ENCODE measurements at regions of chr20 and their contacts with region 1.

Region 1: GRCh38 chr20:4073852-4074741 is 58.7 kb upstream of the RNF24 start:
- DNase-seq: no peak
- H3K4me3 ChIP-seq: no peak overlapping the region
- H3K27ac ChIP-seq: no peak overlapping the region
- H3K4me1 ChIP-seq: no peaks in the 10 kb centered on the region
- H3K27me3 ChIP-seq: no peaks in the 10 kb centered on the region
- CTCF ChIP-seq: no peak
- POLR2A ChIP-seq: no peak

Region 2: GRCh38 chr20:3889489-3890397 is 184.4 kb before region 1 on chr20:
- intact Hi-C with region 1: loop called (anchors 2 kb)
- DNase-seq: no peak
- H3K4me3 ChIP-seq: peak overlapping the region; percentile 96 to 100 (median 98)
- H3K27ac ChIP-seq: peak overlapping the region; percentile 96 to 97
- H3K4me1 ChIP-seq: peaks cover 0 to 24% of the 10 kb centered on the region in 2 donors
- H3K27me3 ChIP-seq: no peaks in the 10 kb centered on the region
- CTCF ChIP-seq: no peak
- POLR2A ChIP-seq: no peak

Region 3: DNA sequence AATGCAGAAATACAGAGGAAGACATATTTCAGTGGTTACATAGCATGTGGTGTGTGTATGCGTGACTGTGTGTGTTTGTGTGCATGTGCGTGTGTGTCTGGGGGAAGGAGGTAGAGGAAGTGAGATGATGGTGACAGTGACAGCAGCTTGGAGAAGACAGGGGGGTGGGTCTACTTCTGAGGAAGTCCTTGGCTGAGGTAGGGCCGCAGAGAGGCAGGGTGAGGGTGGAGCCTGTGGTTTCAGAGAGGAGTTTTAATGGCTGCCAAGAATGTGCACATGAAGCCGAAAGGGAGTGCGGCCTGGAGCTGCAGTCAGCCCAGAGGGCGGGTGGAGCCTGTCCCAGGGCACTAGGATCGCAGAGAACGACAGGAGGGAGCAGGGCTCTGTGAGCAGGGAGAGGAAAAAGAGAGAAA is 36.0 kb before region 1 on chr20:
- intact Hi-C with region 1: no loop called
- DNase-seq: peak; percentile 56 to 84
- H3K4me3 ChIP-seq: peak overlapping the region in 1 of 3 donors; percentile 6
- H3K27ac ChIP-seq: peak overlapping the region; percentile 83 to 89
- H3K4me1 ChIP-seq: peaks cover 4 to 19% of the 10 kb centered on the region in 2 donors
- H3K27me3 ChIP-seq: no peaks in the 10 kb centered on the region
- CTCF ChIP-seq: no peak
- POLR2A ChIP-seq: no peak

Region 4: DNA sequence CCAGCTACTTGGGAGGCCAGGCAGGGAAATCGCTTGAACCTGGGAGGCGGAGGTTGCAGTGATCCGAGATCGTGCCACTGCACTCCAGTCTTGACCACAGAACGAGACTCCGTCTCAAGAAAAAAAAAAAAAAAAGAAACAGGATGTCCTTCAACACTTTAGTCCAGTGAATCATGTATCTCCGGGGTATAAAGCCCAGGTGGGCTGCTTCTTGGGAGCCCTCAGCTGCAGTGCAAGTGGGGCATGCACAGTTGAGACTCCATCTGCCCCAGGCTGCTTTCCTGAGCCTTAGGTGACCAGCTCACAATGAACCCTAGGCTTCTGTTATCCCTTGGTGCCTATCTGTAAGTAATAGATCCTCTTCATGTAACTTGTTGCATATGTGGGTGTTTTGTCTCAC is 128.3 kb after region 1 on chr20:
- intact Hi-C with region 1: no loop called
- DNase-seq: no peak
- H3K4me3 ChIP-seq: no peak overlapping the region
- H3K27ac ChIP-seq: no peak overlapping the region
- H3K4me1 ChIP-seq: no peaks in the 10 kb centered on the region
- H3K27me3 ChIP-seq: no peaks in the 10 kb centered on the region
- CTCF ChIP-seq: no peak
- POLR2A ChIP-seq: no peak

Region 5: DNA sequence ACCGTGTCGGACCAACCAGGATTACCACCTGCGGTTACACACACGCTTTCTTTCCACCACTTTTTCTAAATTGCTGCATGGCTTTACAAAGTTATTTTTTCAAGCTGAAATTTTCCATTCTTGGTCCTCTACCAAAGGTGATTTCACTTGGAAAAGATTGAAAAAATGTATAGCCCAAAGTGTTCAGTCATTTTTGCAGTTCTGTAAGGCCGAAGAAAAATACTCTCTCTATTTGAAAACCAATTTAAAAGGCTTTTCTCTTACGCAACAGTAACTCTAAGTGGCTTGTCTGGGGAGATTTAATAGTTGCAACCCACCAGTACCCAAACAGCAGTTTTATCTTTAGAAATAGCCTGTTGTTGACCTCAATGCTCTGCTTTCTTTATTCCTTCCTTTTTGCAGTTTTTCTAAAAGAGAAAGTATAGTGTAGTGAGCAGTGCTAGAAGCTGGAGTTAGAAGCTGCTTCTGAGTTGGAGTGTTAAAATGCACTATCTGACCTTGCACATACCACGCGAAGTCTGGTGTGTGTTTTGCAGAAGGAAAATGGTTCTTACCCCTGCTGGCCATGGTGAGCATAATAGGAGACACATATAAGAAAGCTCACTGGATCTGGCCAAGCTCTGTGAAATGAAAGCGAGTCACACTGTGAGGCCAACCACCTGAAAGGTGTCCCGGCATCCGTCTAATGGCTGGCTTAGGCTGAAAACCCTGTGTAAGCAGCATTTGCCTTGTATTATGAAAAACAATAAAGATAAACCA is 376.0 kb after region 1 on chr20:
- intact Hi-C with region 1: no loop called
- DNase-seq: no peak
- H3K4me3 ChIP-seq: no peak overlapping the region
- H3K27ac ChIP-seq: no peak overlapping the region
- H3K4me1 ChIP-seq: no peaks in the 10 kb centered on the region
- H3K27me3 ChIP-seq: no peaks in the 10 kb centered on the region
- CTCF ChIP-seq: peak in 1 of 3 donors; percentile 11
- POLR2A ChIP-seq: no peak

Measured in breast epithelium (tissue), 4 donors.